ENCODE measurements at regions of chr20 and their contacts with region 1.

Region 1: DNA sequence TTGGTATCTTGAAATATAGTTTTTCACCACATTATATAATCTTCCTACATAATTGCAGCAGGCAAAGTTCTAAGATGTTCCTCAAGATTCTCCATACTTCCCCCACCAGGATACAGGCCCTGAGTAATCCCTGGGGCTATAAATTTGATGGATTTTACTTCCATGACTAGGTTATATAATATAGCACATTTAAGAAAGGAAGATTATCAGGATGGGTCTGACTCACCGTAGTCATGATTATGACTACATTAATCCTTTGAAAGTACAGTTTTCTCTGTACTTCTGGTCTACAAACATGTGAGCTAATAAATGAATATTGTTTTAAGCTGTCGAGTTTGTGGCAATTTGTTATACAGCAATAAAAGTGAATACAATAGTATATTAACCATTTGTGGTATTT is 122.5 kb downstream of the MACROD2 start:
- DNase-seq: no peak
- H3K4me3 ChIP-seq: no peak overlapping the region
- H3K27ac ChIP-seq: no peak overlapping the region
- H3K4me1 ChIP-seq: no peaks in the 10 kb centered on the region
- H3K27me3 ChIP-seq: no peaks in the 10 kb centered on the region
- CTCF ChIP-seq: no peak

Region 2: GRCh38 chr20:13348311-13349234 is 769.2 kb before region 1 on chr20:
- intact Hi-C with region 1: loop called (anchors 10 kb)
- DNase-seq: no peak
- H3K4me3 ChIP-seq: no peak overlapping the region
- H3K27ac ChIP-seq: no peak overlapping the region
- H3K4me1 ChIP-seq: no peaks in the 10 kb centered on the region
- H3K27me3 ChIP-seq: no peaks in the 10 kb centered on the region
- CTCF ChIP-seq: no peak